Transverse colon (tissue), 4 donors: ENCODE measurements at regions of chr1 and their contacts with region 1.

Region 1: GRCh38 chr1:244801246-244801645 is 34.2 kb upstream of the COX20 start:
- DNase-seq: peak; percentile 13
- H3K4me3 ChIP-seq: no peak overlapping the region
- H3K27ac ChIP-seq: no peak overlapping the region
- H3K4me1 ChIP-seq: no peaks in the 10 kb centered on the region
- H3K27me3 ChIP-seq: no peaks in the 10 kb centered on the region
- CTCF ChIP-seq: peak; percentile 46 to 55 (median 53)
- EP300 ChIP-seq: no peak
- POLR2A ChIP-seq: no peak

Region 2: DNA sequence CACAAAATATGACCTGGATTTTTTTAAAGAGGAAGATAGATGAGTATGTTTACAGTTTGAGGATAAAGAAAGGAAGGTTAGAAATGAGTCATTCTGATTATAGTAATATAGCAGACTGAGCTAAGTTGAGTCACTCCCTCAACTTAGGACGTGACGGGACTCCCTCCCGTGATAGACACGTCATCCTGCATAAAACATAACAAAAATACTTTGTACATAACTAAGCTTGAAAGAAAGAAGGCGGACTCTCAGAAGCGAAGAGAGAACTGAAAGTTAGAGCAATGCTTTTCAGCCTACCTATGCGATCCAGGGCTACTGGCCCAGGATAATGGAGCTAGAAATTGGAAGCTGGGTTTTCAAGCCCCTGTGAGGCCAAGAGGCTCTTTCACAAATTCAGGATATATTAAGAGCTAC is 201.3 kb before region 1 on chr1:
- in situ Hi-C with region 1: loop called (anchors 5 to 10 kb)
- intact Hi-C with region 1: loop called (anchors 2 kb)
- DNase-seq: peak; percentile 12
- H3K4me3 ChIP-seq: no peak overlapping the region
- H3K27ac ChIP-seq: no peak overlapping the region
- H3K4me1 ChIP-seq: peaks cover 0 to 3% (median 0%) of the 10 kb centered on the region in 4 donors
- H3K27me3 ChIP-seq: peaks cover 2% of the 10 kb centered on the region
- CTCF ChIP-seq: no peak
- EP300 ChIP-seq: no peak
- POLR2A ChIP-seq: no peak

Region 3: GRCh38 chr1:244605835-244606370 is 195.3 kb before region 1 on chr1:
- in situ Hi-C with region 1: loop called (anchors 5 to 10 kb)
- intact Hi-C with region 1: loop called (anchors 2 kb)
- DNase-seq: no peak
- H3K4me3 ChIP-seq: no peak overlapping the region
- H3K27ac ChIP-seq: no peak overlapping the region
- H3K4me1 ChIP-seq: no peaks in the 10 kb centered on the region
- H3K27me3 ChIP-seq: peaks cover 2% of the 10 kb centered on the region
- CTCF ChIP-seq: no peak
- EP300 ChIP-seq: no peak
- POLR2A ChIP-seq: no peak

Region 4: DNA sequence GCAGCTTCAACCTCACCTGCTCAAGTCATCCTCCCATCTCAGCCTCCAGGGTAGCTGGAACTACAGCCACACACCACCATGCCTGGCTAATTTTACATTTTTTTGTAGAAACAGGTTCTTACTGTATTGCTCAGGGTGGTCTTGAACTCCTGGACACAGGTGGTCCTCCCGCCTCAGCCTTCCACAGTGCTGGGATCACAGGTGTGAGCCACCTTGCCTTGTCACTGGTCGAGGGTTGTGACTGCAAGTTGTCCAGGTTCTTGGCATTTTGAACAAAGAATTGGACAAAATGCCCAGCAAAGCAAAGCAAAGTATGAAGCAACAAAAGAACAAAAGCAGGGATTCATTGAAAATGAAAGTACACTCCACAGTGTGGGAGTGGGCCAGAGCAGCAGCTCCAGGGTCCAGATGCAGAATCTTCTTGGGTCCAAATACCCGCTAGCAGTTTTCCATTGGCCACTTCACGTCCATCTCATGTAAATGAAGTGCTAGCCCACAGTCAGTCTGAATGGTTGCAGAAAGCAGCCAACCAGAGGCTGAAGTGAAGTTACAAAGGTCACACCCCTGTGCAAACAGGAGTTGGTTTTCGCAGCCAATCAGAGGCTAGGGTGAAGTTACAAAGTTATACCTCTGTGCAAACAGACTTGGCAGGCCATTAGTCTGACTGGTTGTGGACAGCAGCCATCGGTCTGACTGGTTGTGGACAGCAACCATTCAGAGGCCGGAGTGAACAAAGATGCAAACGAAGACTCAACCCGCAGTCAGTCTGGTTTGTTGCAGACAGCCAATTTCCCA is 244.0 kb after region 1 on chr1:
- in situ Hi-C with region 1: loop called (anchors 5 to 10 kb)
- intact Hi-C with region 1: loop called (anchors 10 kb)
- DNase-seq: peak; percentile 75
- H3K4me3 ChIP-seq: no peak overlapping the region
- H3K27ac ChIP-seq: peak overlapping the region; percentile 29 to 65 (median 37)
- H3K4me1 ChIP-seq: peaks cover 0 to 29% (median 13%) of the 10 kb centered on the region in 4 donors
- H3K27me3 ChIP-seq: no peaks in the 10 kb centered on the region
- CTCF ChIP-seq: no peak
- EP300 ChIP-seq: no peak
- POLR2A ChIP-seq: peak; percentile 32

Region 5: GRCh38 chr1:245051349-245052221 is 250.3 kb after region 1 on chr1:
- in situ Hi-C with region 1: loop called in 3 of 4 experiments (anchors 10 kb)
- intact Hi-C with region 1: loop called (anchors 10 kb)
- DNase-seq: no peak
- H3K4me3 ChIP-seq: no peak overlapping the region
- H3K27ac ChIP-seq: no peak overlapping the region
- H3K4me1 ChIP-seq: peaks cover 0 to 3% (median under 1%) of the 10 kb centered on the region in 4 donors
- H3K27me3 ChIP-seq: no peaks in the 10 kb centered on the region
- CTCF ChIP-seq: no peak
- EP300 ChIP-seq: no peak
- POLR2A ChIP-seq: no peak